ENCODE measurements at regions of chr13 and their contacts with region 1.

Region 1: GRCh38 chr13:41668130-41668757 is 210.9 kb downstream of the RGCC start:
- DNase-seq: peak in 1 of 2 experiments; percentile 23
- H3K4me3 ChIP-seq: no peak overlapping the region
- H3K27ac ChIP-seq: no peak overlapping the region
- H3K4me1 ChIP-seq: no peaks in the 10 kb centered on the region
- H3K27me3 ChIP-seq: peaks cover 0 to 1% (median 0%) of the 10 kb centered on the region in 4 experiments; a peak in 1 of 7 replicates
- CTCF ChIP-seq: peak in 2 of 3 experiments; percentile 83 to 89; a peak in 3 of 4 replicates
- EP300 ChIP-seq: no peak
- POLR2A ChIP-seq: no peak
- RAD21 ChIP-seq: peak; percentile 94 to 95

Region 2: DNA sequence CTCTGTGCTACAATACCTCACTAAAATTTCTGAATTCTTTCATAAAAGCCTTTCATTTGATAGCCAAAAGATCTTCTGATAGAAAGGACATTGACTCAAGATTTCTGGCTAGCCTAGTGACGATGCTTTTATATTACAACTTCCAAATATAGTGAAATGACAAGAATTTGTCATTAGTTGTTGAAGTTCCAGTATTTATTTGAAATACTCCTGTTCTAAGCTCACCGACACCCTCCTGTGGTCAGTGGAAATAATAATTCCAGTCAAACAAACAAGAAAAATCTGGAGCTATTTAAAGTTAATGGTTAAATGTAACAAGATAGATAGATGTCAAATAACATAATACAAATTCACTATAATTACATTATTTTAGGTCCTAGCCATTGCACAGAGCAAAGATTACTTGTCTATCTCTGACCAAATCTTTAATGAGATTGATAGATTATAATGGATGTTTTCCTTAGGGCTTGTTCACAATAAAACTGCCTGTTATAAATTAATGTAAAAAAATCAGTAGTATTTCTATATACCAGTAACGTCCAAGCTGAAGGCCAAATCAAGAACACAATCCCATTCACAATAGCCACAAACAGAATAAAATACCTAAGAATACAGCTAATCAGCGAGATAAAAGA is 15.4 kb before region 1 on chr13:
- CTCF ChIA-PET with region 1: interaction called, 56 read pairs
- POLR2A ChIA-PET with region 1: no interaction called
- DNase-seq: no peak
- H3K4me3 ChIP-seq: no peak overlapping the region
- H3K27ac ChIP-seq: no peak overlapping the region
- H3K4me1 ChIP-seq: no peaks in the 10 kb centered on the region
- H3K27me3 ChIP-seq: no peaks in the 10 kb centered on the region
- CTCF ChIP-seq: peak in 2 of 3 experiments; percentile 24 to 31; a peak in 2 of 4 replicates
- EP300 ChIP-seq: no peak
- POLR2A ChIP-seq: no peak
- RAD21 ChIP-seq: peak; percentile 62 to 72

Region 3: DNA sequence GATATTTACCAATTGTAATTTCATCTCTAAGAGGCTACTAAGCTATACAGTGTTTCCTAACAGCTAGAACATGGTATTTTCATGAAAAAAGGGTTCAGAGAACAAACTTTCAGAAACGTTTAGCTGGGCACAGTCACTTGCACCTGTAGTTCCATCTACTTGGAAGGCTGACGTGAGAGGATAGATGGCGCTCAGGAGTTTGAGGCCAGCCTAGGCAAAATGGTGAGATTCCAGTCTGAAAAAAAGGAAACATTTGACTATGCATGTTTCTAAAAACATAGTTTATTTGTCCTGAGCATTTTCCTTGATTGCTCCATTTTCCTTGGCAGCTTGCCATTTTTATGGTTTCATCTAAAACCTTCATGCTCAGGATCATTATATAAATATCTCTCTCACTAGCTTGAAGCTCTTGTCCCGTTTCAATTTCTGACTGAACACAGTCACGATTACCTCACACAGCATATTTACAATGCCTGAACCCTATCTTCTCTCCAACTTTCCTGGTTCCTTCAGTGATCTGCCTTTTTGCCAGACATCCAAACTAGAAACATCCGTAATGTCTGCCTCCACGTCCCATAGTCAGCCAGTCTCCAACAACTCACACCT is 10.1 kb before region 1 on chr13:
- CTCF ChIA-PET with region 1: interaction called, 56 read pairs
- POLR2A ChIA-PET with region 1: no interaction called
- DNase-seq: no peak
- H3K4me3 ChIP-seq: no peak overlapping the region
- H3K27ac ChIP-seq: no peak overlapping the region
- H3K4me1 ChIP-seq: no peaks in the 10 kb centered on the region
- H3K27me3 ChIP-seq: no peaks in the 10 kb centered on the region
- CTCF ChIP-seq: peak; percentile 18 to 44 (median 20); a peak in 3 of 4 replicates
- EP300 ChIP-seq: no peak
- POLR2A ChIP-seq: no peak
- RAD21 ChIP-seq: peak; percentile 22 to 41; a peak in 3 of 4 replicates

Region 4: GRCh38 chr13:41678249-41678648 is 10.0 kb after region 1 on chr13:
- CTCF ChIA-PET with region 1: interaction called, 24 read pairs
- POLR2A ChIA-PET with region 1: no interaction called
- DNase-seq: no peak
- H3K4me3 ChIP-seq: no peak overlapping the region
- H3K27ac ChIP-seq: no peak overlapping the region
- H3K4me1 ChIP-seq: peaks cover 0 to 6% (median 5%) of the 10 kb centered on the region in 4 experiments; a peak in 2 of 7 replicates
- H3K27me3 ChIP-seq: no peaks in the 10 kb centered on the region
- CTCF ChIP-seq: no peak
- EP300 ChIP-seq: no peak
- POLR2A ChIP-seq: no peak
- RAD21 ChIP-seq: no peak

Measured in H1 (cell line).